CD4-positive, alpha-beta T cell (primary cell): ENCODE measurements at regions of chr1 and their contacts with region 1.

Region 1: GRCh38 chr1:86380257-86380861 is 15.8 kb downstream of the ODF2L start:
- DNase-seq: peak in 4 of 14 experiments; percentile 38 to 80 (median 72)
- ATAC-seq: peak; percentile 86
- H3K4me3 ChIP-seq: no peak overlapping the region
- H3K4me3 Mint-ChIP-seq: no peak overlapping the region
- H3K27ac ChIP-seq: no peak overlapping the region
- H3K27ac Mint-ChIP-seq: peak overlapping the region; percentile 69
- H3K4me1 ChIP-seq: no peaks in the 10 kb centered on the region
- H3K4me1 Mint-ChIP-seq: peaks cover 29% of the 10 kb centered on the region
- H3K27me3 ChIP-seq: no peaks in the 10 kb centered on the region
- H3K27me3 Mint-ChIP-seq: no peaks in the 10 kb centered on the region
- CTCF ChIP-seq: peak; percentile 95

Region 2: DNA sequence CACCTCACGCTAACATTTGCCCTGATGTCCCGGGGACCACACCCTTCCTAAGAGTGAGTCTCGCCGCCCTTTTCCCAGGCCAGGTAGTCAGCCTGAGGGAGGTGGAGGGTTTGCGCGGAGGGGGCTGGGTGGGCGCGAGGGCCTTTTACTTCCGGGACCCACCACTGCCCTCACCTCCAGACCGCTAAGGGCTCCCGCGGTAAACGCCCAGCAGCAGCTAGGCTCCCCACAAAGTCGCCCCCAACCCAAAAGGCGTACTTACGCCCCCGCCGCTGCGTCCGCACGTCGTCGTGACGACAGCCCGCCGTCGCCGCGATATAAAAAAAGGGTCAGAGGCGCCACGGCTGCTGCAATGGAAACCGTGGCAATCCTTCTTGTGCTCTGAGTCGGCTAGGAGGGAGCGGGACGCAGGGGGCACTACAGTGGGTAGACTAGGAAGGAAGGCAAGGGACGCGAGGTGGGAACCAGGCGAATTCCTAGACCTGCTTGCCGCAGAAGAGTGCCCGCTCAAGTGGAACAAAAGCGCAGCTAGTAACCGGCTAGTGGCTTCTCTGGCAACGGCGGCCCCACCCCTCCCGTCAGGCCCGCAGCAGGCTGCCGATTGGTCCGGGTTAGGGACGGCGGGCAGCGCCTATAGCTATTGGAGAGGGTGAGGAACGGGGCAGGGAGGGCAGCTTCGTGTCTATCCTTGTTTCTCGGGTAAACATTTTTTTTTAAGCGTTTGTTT is 15.6 kb after region 1 on chr1 and contains the start of gene ODF2L:
- CTCF ChIA-PET with region 1: interaction called, 7 read pairs
- POLR2A ChIA-PET with region 1: interaction called, 40 read pairs
- intact Hi-C with region 1: no loop called
- DNase-seq: peak; percentile 77 to 95 (median 84)
- ATAC-seq: peak; percentile 97
- H3K4me3 ChIP-seq: peak within 1 kb of the TSS; percentile 67
- H3K4me3 Mint-ChIP-seq: peak within 1 kb of the TSS; percentile 93
- H3K27ac ChIP-seq: peak within 1 kb of the TSS; percentile 75 to 89
- H3K27ac Mint-ChIP-seq: peak within 1 kb of the TSS; percentile 96
- H3K4me1 ChIP-seq: peaks cover 19% of the 10 kb centered on the region
- H3K4me1 Mint-ChIP-seq: peaks cover 69% of the 10 kb centered on the region
- H3K27me3 ChIP-seq: no peaks in the 10 kb centered on the region
- H3K27me3 Mint-ChIP-seq: no peaks in the 10 kb centered on the region
- CTCF ChIP-seq: no peak
- total RNA-seq, gene ODF2L: 68.1 to 71.2 TPM

Region 3: DNA sequence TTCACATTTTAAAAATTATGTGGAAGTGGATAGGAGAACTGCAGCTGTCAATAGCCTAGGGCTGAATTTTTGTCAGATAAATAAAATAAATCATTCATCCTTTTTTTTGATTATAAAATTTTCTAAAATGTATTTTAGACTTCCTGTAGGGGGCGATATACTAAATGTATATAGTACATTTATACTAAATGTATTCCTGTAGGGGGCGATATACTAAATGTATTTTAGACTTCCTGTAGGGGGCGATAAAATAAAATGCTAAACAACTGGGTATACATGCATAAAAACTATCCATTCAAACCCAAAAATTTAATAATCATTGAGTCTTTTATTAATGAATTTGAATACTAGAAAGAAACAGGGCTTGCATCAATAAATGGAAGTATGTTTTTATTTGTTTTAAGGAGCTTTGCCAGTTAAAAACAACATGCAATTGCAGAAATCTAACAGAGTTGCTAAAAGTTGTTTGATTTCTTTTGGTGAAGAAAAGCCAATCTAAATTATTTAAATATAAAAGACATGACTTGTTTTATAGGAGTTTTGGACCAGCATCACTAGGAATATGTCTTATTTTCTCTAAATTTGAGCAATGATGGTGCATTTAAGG is 119.7 kb after region 1 on chr1:
- CTCF ChIA-PET with region 1: interaction called, 10 read pairs
- POLR2A ChIA-PET with region 1: no interaction called
- intact Hi-C with region 1: loop called (anchors 1 kb)
- DNase-seq: peak in 3 of 14 experiments; percentile 55 to 79 (median 57)
- ATAC-seq: peak; percentile 61
- H3K4me3 ChIP-seq: no peak overlapping the region
- H3K4me3 Mint-ChIP-seq: no peak overlapping the region
- H3K27ac ChIP-seq: no peak overlapping the region
- H3K27ac Mint-ChIP-seq: no peak overlapping the region
- H3K4me1 ChIP-seq: peaks cover 7% of the 10 kb centered on the region
- H3K4me1 Mint-ChIP-seq: peaks cover 17% of the 10 kb centered on the region
- H3K27me3 ChIP-seq: peaks cover 0 to 3% of the 10 kb centered on the region in 2 experiments
- H3K27me3 Mint-ChIP-seq: peaks cover 23% of the 10 kb centered on the region
- CTCF ChIP-seq: peak; percentile 100